Activated T-helper 1 cell treated with anti-CD3 and anti-CD28 coated beads, Interleukin-12 subunit alpha, Interleukin-12 subunit beta, Interleukin-2, Interleukin-4 antibody, amounts not matched to agents 30 ng/mL and 10 ng/mL and 1 ng/mL, durations not matched to agents 14 hours and 24 hours and 36 hours (primary cell): ENCODE measurements at regions of chr1 and their contacts with region 1.

Region 1: GRCh38 chr1:67376381-67376780 is 53.8 kb downstream of the SERBP1 start:
- DNase-seq: no peak
- H3K4me3 Mint-ChIP-seq: no peak overlapping the region
- H3K27ac Mint-ChIP-seq: peak overlapping the region; percentile 59
- H3K4me1 Mint-ChIP-seq: peaks cover 36% of the 10 kb centered on the region
- H3K27me3 Mint-ChIP-seq: no peaks in the 10 kb centered on the region

Region 2: GRCh38 chr1:67361641-67362040 is 14.7 kb before region 1 on chr1:
- intact Hi-C with region 1: loop called (anchors 2 kb)
- DNase-seq: no peak
- H3K4me3 Mint-ChIP-seq: no peak overlapping the region
- H3K27ac Mint-ChIP-seq: peak overlapping the region; percentile 78
- H3K4me1 Mint-ChIP-seq: peaks cover 48% of the 10 kb centered on the region
- H3K27me3 Mint-ChIP-seq: no peaks in the 10 kb centered on the region

Region 3: DNA sequence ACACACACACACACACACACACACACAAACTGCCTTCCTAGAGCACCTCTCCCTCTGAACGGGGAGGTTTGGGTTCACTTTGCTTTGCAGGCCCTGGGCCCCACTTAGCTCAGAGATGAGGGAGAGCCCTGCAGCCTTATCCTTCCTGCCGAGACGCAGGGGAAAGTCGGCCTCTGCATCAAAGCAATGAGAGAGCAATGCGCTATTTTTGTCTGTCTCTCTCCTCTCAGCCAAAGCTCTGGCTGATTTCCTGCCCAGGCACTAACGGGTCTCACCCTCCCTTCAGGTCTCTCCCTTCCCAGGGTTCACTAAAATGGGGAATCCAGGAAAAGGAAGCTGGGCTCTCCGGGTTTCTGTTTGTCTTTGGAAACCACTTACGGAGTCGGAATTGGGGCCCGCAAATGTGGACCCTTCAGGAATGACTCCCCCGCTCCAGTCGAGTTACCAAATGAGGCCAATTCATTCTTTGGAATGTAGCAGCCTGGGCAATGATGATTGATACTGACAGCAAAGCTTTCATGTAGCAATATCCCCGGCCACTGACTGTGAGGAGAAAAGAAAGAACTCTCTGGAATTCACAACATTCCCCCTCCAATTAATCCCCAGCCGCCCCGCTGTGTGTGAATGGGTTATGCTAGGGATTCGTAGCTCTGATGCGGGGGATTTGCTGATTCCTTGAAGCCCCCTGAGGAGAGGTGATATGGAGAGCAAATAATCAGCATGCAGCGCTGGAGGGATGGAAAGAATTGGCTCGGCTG is 917.4 kb after region 1 on chr1:
- intact Hi-C with region 1: no loop called
- DNase-seq: no peak
- H3K4me3 Mint-ChIP-seq: no peak overlapping the region
- H3K27ac Mint-ChIP-seq: no peak overlapping the region
- H3K4me1 Mint-ChIP-seq: no peaks in the 10 kb centered on the region
- H3K27me3 Mint-ChIP-seq: peaks cover 3% of the 10 kb centered on the region